ENCODE measurements at regions of chr5 and their contacts with region 1.

Region 1: GRCh38 chr5:126414874-126415502 is 8.2 kb upstream of the GRAMD2B start:
- DNase-seq: peak; percentile 37 to 68 (median 47)
- H3K4me3 ChIP-seq: no peak overlapping the region
- H3K27ac ChIP-seq: peak overlapping the region in 1 of 2 donors; percentile 47
- H3K4me1 ChIP-seq: peaks cover 10% of the 10 kb centered on the region
- H3K27me3 ChIP-seq: no peaks in the 10 kb centered on the region
- CTCF ChIP-seq: no peak
- EP300 ChIP-seq: no peak
- POLR2A ChIP-seq: no peak

Region 2: GRCh38 chr5:126124706-126125345 is 290.2 kb before region 1 on chr5:
- intact Hi-C with region 1: no loop called
- DNase-seq: no peak
- H3K4me3 ChIP-seq: no peak overlapping the region
- H3K27ac ChIP-seq: no peak overlapping the region
- H3K4me1 ChIP-seq: no peaks in the 10 kb centered on the region
- H3K27me3 ChIP-seq: no peaks in the 10 kb centered on the region
- CTCF ChIP-seq: no peak
- EP300 ChIP-seq: no peak
- POLR2A ChIP-seq: no peak

Region 3: DNA sequence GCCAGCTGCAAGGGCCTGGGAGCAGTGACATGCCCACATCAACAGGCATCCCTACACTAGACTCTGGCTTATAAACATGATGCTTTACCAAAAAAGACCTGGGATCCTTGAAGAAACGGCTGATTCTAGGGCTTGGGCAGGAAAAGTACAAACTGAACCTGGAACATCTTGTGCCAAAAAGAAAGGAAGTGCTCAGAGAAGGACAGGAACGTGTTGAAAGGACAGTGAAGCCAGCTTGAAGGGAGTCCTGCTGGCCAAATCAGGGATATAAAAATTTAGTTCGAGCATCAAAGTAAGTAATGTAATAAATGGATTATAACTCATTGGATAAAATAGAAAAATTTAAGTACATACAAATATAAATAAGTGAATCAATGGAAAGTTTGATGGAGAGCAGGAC is 121.9 kb after region 1 on chr5:
- intact Hi-C with region 1: loop called in 1 of 4 experiments (anchors 5 kb)
- DNase-seq: no peak
- H3K4me3 ChIP-seq: no peak overlapping the region
- H3K27ac ChIP-seq: no peak overlapping the region
- H3K4me1 ChIP-seq: peaks cover 6% of the 10 kb centered on the region
- H3K27me3 ChIP-seq: no peaks in the 10 kb centered on the region
- CTCF ChIP-seq: no peak
- EP300 ChIP-seq: no peak
- POLR2A ChIP-seq: no peak